AG04450 (cell line): ENCODE measurements at regions of chr1 and their contacts with region 1.

Region 1: GRCh38 chr1:214637722-214638458 is 34.9 kb downstream of the CENPF start:
- DNase-seq: peak; percentile 24
- H3K4me3 ChIP-seq: no peak overlapping the region
- H3K27ac ChIP-seq: no peak overlapping the region
- H3K27me3 ChIP-seq: no peaks in the 10 kb centered on the region
- CTCF ChIP-seq: peak; percentile 84

Region 2: DNA sequence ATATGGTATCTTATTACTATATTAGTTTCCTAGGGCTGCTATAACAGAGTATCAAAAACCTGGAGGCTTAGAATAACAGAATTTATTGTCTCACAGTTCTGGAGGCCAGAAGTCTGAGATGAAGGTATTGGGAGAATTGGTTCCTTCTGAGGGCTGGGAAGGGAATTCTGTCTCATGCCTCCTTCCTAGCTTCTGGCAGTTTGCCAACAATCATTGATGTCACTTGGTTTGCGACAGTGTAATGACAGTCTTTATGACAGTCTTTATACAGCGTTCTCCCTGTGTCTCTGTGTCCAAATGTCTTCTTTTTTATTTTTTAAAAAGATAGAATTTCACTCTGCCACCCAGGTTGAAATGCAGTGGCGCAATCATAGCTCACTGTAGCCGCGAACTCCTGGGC is 50.7 kb before region 1 on chr1:
- CTCF ChIA-PET with region 1: no interaction called
- POLR2A ChIA-PET with region 1: no interaction called
- DNase-seq: no peak
- H3K4me3 ChIP-seq: no peak overlapping the region
- H3K27ac ChIP-seq: no peak overlapping the region
- H3K27me3 ChIP-seq: no peaks in the 10 kb centered on the region
- CTCF ChIP-seq: no peak

Region 3: DNA sequence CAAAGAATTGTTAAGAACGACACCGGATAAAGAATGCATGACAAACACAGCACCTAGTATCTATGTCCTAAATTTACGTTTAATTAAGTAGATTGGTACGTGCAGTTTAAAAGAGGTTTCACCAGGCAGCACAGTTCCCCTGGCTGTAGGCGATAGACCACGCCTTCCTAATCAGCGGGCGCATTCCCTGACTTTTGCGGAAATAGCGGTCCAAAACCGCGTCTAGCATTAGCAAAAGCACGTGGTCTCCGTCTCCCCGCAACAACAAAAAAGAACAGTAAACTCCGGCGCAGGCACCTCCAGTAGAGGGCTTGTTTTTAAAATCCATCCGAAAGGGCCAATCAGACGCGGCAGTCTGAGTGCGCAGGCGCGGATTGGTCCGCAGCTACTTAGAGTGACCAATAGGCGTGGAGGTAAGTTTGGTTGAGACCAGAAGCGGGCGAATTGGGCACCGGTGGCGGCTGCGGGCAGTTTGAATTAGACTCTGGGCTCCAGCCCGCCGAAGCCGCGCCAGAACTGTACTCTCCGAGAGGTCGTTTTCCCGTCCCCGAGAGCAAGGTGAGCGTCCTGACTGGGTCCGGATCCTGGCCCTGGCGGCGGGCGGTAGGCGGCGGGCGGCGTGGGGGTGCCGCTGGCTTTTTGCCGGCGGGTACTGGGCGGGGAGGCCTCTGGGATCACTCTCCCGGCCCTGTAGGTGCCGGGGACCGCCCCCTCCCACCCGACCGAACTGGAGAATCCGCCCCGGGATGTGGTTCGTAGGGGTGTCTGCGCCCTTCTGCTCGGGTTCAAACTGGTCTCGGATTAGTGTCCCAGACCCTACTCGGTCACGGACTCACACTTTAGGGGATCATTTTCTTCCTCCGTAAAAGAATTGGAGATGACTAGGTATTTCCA is 34.9 kb before region 1 on chr1 and contains the start of gene CENPF:
- CTCF ChIA-PET with region 1: no interaction called
- POLR2A ChIA-PET with region 1: no interaction called
- DNase-seq: peak; percentile 96
- H3K4me3 ChIP-seq: peak within 1 kb of the TSS; percentile 80
- H3K27ac ChIP-seq: peak within 1 kb of the TSS; percentile 11
- H3K27me3 ChIP-seq: no peaks in the 10 kb centered on the region
- CTCF ChIP-seq: peak; percentile 29; the same call in 1 of the 2 replicates
- polyA plus RNA-seq, gene CENPF: 11.1 and 17.5 TPM in 2 replicates

Region 4: GRCh38 chr1:214615871-214616270 is 22.0 kb before region 1 on chr1:
- CTCF ChIA-PET with region 1: interaction called, 13 read pairs
- POLR2A ChIA-PET with region 1: no interaction called
- DNase-seq: peak; percentile 30
- H3K4me3 ChIP-seq: no peak overlapping the region
- H3K27ac ChIP-seq: no peak overlapping the region
- H3K27me3 ChIP-seq: no peaks in the 10 kb centered on the region
- CTCF ChIP-seq: no peak

Region 5: DNA sequence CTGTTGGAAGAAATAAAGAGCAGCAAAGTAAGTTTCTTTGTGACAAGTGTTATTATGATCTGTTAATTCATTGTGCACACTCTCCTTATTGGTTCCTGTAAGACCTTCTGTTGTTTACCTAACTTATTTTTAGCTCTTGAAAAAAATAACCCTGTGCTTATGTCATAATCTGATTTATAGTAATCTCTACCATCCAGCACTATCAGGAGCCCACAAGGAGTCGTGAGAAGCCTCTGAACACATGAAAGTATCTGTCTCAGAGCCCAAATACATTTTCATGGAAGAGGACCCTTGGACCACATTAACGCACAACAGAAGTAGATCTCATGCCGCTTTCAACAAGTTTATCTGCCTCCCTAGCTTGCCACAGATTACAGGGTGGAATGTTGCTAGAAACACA is 10.9 kb after region 1 on chr1:
- CTCF ChIA-PET with region 1: interaction called, 67 read pairs
- POLR2A ChIA-PET with region 1: no interaction called
- DNase-seq: no peak
- H3K4me3 ChIP-seq: no peak overlapping the region
- H3K27ac ChIP-seq: no peak overlapping the region
- H3K27me3 ChIP-seq: no peaks in the 10 kb centered on the region
- CTCF ChIP-seq: no peak

Region 6: GRCh38 chr1:214660862-214661261 is 23.0 kb after region 1 on chr1:
- CTCF ChIA-PET with region 1: interaction called, 28 read pairs
- POLR2A ChIA-PET with region 1: no interaction called
- DNase-seq: peak; percentile 84
- H3K4me3 ChIP-seq: no peak overlapping the region
- H3K27ac ChIP-seq: no peak overlapping the region
- H3K27me3 ChIP-seq: no peaks in the 10 kb centered on the region
- CTCF ChIP-seq: peak; percentile 88